ENCODE measurements at regions of chr11 and their contacts with region 1.

Region 1: GRCh38 chr11:14619603-14620531 is 23.7 kb upstream of the PDE3B start:
- DNase-seq: no peak
- ATAC-seq: no peak
- H3K4me3 Mint-ChIP-seq: no peak overlapping the region
- H3K27ac Mint-ChIP-seq: no peak overlapping the region
- H3K4me1 Mint-ChIP-seq: no peaks in the 10 kb centered on the region
- H3K27me3 Mint-ChIP-seq: no peaks in the 10 kb centered on the region
- CTCF ChIP-seq: no peak

Region 2: GRCh38 chr11:14643697-14644225 is 23.9 kb after region 1 on chr11 and contains the start of gene PDE3B:
- CTCF ChIA-PET with region 1: interaction called, 16 read pairs
- POLR2A ChIA-PET with region 1: interaction called, 4 read pairs
- DNase-seq: peak; percentile 85
- ATAC-seq: peak; percentile 89
- H3K4me3 Mint-ChIP-seq: peak within 1 kb of the TSS; percentile 90
- H3K27ac Mint-ChIP-seq: no peak within 1 kb of the TSS
- H3K4me1 Mint-ChIP-seq: peaks cover 29% of the 10 kb centered on the region
- H3K27me3 Mint-ChIP-seq: peaks cover 34% of the 10 kb centered on the region
- CTCF ChIP-seq: no peak
- total RNA-seq, gene PDE3B: 9.4 to 9.6 TPM (median 9.5 TPM) in 3 replicates

Region 3: GRCh38 chr11:14773755-14774154 is 153.9 kb after region 1 on chr11:
- CTCF ChIA-PET with region 1: interaction called, 32 read pairs
- POLR2A ChIA-PET with region 1: no interaction called
- DNase-seq: peak; percentile 14
- ATAC-seq: peak; percentile 89
- H3K4me3 Mint-ChIP-seq: no peak overlapping the region
- H3K27ac Mint-ChIP-seq: no peak overlapping the region
- H3K4me1 Mint-ChIP-seq: peaks cover 6% of the 10 kb centered on the region
- H3K27me3 Mint-ChIP-seq: no peaks in the 10 kb centered on the region
- CTCF ChIP-seq: peak; percentile 29; the same call in 1 of the 2 replicates

Region 4: GRCh38 chr11:14892036-14892567 is 272.2 kb after region 1 on chr11 and contains the start of gene CYP2R1:
- CTCF ChIA-PET with region 1: interaction called, 24 read pairs
- POLR2A ChIA-PET with region 1: no interaction called
- DNase-seq: peak; percentile 97
- ATAC-seq: peak; percentile 98
- H3K4me3 Mint-ChIP-seq: peak within 1 kb of the TSS; percentile 90
- H3K27ac Mint-ChIP-seq: peak within 1 kb of the TSS; percentile 50
- H3K4me1 Mint-ChIP-seq: peaks cover 20% of the 10 kb centered on the region
- H3K27me3 Mint-ChIP-seq: peaks cover 34% of the 10 kb centered on the region
- CTCF ChIP-seq: no peak
- total RNA-seq, gene CYP2R1: 14.9 to 23.1 TPM (median 18.3 TPM) in 3 replicates

Region 5: GRCh38 chr11:15136166-15136565 is 516.3 kb after region 1 on chr11:
- CTCF ChIA-PET with region 1: no interaction called
- POLR2A ChIA-PET with region 1: no interaction called
- DNase-seq: no peak
- ATAC-seq: no peak
- H3K4me3 Mint-ChIP-seq: no peak overlapping the region
- H3K27ac Mint-ChIP-seq: no peak overlapping the region
- H3K4me1 Mint-ChIP-seq: no peaks in the 10 kb centered on the region
- H3K27me3 Mint-ChIP-seq: no peaks in the 10 kb centered on the region
- CTCF ChIP-seq: no peak